ENCODE measurements at regions of chr1 and their contacts with region 1.

Region 1: GRCh38 chr1:25796811-25797458 is 3.1 kb upstream of the SELENON start:
- DNase-seq: peak; percentile 83
- H3K4me3 Mint-ChIP-seq: no peak overlapping the region
- H3K27ac Mint-ChIP-seq: no peak overlapping the region
- H3K4me1 Mint-ChIP-seq: peaks cover 18% of the 10 kb centered on the region
- H3K27me3 Mint-ChIP-seq: no peaks in the 10 kb centered on the region
- CTCF ChIP-seq: peak; percentile 79

Region 2: GRCh38 chr1:25239681-25240541 is 557.0 kb before region 1 on chr1:
- CTCF ChIA-PET with region 1: interaction called, 4 read pairs
- POLR2A ChIA-PET with region 1: interaction called, 3 read pairs
- intact Hi-C with region 1: loop called (anchors 10 kb)
- DNase-seq: peak; percentile 96
- H3K4me3 Mint-ChIP-seq: peak overlapping the region; percentile 78
- H3K27ac Mint-ChIP-seq: peak overlapping the region; percentile 85
- H3K4me1 Mint-ChIP-seq: peaks cover 24% of the 10 kb centered on the region
- H3K27me3 Mint-ChIP-seq: no peaks in the 10 kb centered on the region
- CTCF ChIP-seq: peak; percentile 48

Region 3: DNA sequence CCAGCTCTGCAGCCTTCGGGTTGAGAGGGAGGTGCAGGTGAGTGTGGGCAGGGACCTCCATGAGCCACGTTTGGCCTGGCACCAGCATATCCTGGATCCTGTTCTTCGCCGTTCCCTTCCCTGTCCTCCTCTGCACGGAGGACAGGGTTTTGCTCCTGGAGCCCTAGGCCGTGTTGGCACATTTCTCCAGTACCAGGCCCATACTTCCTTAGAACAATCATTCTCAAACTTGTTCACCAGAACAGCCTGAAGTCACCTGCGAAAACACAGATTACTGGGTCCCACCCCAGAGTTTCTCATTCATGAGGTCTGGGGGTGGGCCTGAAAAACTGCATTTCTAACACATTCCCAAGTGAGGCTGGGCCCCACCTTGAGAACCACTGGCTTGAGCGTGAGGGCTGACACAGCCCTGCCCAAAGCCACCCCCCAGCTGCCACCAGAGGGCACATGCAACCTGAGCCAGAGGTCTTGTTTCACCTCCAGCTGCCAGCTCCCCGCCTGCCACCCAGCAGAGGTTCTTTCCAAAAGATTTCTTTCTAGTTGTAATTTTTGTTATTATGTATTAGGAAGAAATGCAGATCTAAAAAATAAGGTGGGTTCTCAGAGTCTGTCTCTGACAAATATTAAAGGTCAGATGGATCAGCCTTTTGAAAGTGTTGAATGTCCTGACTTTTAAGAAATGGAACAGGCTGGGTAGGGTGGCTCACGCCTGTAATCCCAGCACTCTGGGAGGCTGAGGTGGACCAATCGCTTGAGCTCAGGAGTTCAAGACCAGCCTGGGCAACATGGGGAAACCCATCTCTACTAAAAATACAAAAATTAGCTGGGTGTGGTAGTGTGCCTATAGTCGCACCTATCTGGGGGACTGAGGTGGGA is 293.1 kb before region 1 on chr1:
- CTCF ChIA-PET with region 1: interaction called, 5 read pairs
- POLR2A ChIA-PET with region 1: no interaction called
- intact Hi-C with region 1: loop called (anchors 5 kb)
- DNase-seq: peak; percentile 44
- H3K4me3 Mint-ChIP-seq: no peak overlapping the region
- H3K27ac Mint-ChIP-seq: peak overlapping the region; percentile 31
- H3K4me1 Mint-ChIP-seq: no peaks in the 10 kb centered on the region
- H3K27me3 Mint-ChIP-seq: no peaks in the 10 kb centered on the region
- CTCF ChIP-seq: peak; percentile 48

Region 4: DNA sequence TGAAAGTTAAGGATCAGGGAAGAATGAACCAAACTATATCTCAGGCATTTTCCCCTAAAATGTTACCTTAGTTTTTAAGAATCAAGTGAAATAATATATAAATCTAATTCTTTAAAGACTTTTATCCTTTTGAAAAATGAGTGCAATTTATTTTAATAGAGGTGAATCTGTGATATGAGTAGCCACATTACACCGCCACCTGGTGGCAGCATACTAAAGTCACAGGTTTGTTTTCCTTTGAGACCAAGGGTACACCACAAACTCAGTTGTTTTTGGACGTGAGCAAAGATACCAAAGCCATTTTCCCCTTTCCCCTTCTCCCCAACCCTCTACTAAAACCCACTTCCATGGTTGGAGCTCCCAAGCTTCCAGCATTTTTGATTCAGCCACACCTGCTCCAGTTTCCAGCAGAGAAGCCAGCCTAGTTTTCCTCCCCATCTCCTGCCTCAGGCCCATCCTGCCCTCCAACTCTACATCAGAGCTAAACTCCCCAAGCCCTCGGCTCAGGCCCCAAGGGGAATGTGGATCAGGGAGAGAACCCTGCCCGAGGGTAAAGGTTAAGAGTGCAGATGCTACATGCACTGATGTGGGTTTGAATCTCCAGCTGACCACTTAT is 276.4 kb before region 1 on chr1:
- CTCF ChIA-PET with region 1: interaction called, 7 read pairs
- POLR2A ChIA-PET with region 1: no interaction called
- intact Hi-C with region 1: loop called (anchors 5 kb)
- DNase-seq: peak; percentile 69
- H3K4me3 Mint-ChIP-seq: no peak overlapping the region
- H3K27ac Mint-ChIP-seq: no peak overlapping the region
- H3K4me1 Mint-ChIP-seq: no peaks in the 10 kb centered on the region
- H3K27me3 Mint-ChIP-seq: peaks cover 9% of the 10 kb centered on the region
- CTCF ChIP-seq: peak; percentile 62

Region 5: GRCh38 chr1:25608488-25609178 is 188.3 kb before region 1 on chr1:
- CTCF ChIA-PET with region 1: interaction called, 15 read pairs
- POLR2A ChIA-PET with region 1: no interaction called
- intact Hi-C with region 1: loop called (anchors 1 kb)
- DNase-seq: peak; percentile 81
- H3K4me3 Mint-ChIP-seq: no peak overlapping the region
- H3K27ac Mint-ChIP-seq: no peak overlapping the region
- H3K4me1 Mint-ChIP-seq: no peaks in the 10 kb centered on the region
- H3K27me3 Mint-ChIP-seq: peaks cover 59% of the 10 kb centered on the region
- CTCF ChIP-seq: peak; percentile 35

Region 6: GRCh38 chr1:25695090-25695770 is 101.7 kb before region 1 on chr1:
- CTCF ChIA-PET with region 1: interaction called, 3 read pairs
- POLR2A ChIA-PET with region 1: no interaction called
- intact Hi-C with region 1: loop called (anchors 5 kb)
- DNase-seq: peak; percentile 92
- H3K4me3 Mint-ChIP-seq: no peak overlapping the region
- H3K27ac Mint-ChIP-seq: peak overlapping the region; percentile 57
- H3K4me1 Mint-ChIP-seq: peaks cover 13% of the 10 kb centered on the region
- H3K27me3 Mint-ChIP-seq: no peaks in the 10 kb centered on the region
- CTCF ChIP-seq: peak; percentile 6

Region 7: DNA sequence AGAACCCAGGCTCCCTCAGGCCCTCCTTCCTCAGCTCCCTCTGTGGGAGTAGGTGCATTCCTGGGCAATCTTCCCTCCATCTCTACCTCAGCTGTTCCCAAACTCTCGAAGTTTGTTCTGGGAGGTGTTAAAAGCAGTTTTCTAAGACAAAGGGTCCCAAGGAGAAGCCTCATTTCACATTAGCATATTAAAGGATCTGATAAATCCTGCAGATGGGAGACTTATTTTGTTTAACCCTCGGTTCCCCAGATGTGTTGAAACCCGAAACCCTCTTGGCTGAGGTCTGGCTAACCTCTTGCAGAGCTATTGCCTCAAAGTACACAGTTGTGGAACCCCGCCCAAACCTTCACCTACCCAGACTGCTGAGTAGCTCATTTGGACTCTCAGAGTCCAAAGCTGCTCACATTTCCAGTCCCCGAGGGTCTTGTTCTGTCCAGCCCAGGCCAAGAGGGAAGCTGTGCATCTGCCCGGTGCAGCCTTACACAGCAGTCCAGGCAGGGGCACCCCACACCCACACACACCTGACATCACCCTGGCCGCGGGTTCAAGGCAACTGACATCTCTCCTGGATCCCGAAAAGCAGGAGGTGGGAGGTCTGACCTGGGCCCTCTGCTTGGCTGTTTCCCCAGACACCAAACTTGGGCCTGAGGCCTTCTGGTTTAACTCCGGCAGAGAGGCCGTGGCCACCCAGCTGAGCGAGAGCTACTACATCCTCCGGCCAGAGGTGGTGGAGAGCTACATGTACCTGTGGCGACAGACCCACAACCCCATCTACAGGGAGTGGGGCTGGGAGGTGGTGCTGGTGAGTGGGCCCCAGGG is 16.4 kb before region 1 on chr1:
- CTCF ChIA-PET with region 1: no interaction called
- POLR2A ChIA-PET with region 1: no interaction called
- intact Hi-C with region 1: no loop called
- DNase-seq: peak; percentile 49
- H3K4me3 Mint-ChIP-seq: no peak overlapping the region
- H3K27ac Mint-ChIP-seq: no peak overlapping the region
- H3K4me1 Mint-ChIP-seq: no peaks in the 10 kb centered on the region
- H3K27me3 Mint-ChIP-seq: no peaks in the 10 kb centered on the region
- CTCF ChIP-seq: no peak

Region 8: DNA sequence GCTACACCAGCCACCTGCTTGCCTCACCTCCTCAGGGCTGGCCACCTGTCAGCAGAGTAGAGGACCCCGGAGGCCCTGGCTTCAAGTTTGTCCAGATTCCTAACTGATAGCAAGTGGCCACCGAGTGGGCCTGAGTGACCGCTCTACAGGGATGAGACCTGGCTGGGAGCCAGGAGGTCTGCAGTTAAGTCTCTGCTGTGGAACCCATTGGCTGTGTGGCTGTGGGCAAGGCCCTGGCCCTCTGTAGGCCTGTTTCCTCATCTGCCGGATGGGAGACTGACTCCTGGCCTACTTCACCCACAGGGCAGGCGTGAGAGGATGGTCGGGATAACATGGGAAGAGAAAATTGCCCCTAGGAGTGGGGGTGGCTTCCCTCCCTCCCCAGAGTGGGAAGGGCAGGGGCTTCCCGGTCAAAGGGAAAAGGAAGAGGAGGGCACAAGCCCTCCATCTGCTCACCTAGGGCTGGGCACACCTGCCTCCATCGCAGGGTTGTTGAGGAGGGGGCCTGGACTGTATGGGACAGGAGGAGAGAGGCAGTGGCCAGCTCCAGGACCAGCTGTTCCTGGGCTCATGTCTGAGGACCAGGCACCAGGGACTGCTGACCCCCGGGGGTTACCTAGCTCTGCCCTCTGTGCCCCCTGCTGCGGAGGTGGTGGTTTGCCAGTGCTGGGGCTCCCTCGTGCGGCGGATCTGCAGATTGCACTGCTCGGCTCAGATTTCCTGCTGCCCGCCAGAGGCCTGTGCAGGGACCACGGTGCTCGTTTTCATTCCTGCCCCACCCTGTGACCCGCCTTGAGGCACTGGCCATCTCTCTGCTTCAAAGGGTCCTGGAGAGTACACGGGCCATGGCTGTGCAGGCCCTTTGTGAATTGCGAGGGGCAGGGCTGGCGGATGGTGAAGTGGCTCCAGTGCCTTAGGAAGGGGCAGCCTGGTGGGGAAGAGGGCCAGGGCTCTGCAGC is 13.7 kb after region 1 on chr1:
- CTCF ChIA-PET with region 1: interaction called, 16 read pairs
- POLR2A ChIA-PET with region 1: no interaction called
- intact Hi-C with region 1: no loop called
- DNase-seq: peak; percentile 50
- H3K4me3 Mint-ChIP-seq: no peak overlapping the region
- H3K27ac Mint-ChIP-seq: peak overlapping the region; percentile 70
- H3K4me1 Mint-ChIP-seq: peaks cover 8% of the 10 kb centered on the region
- H3K27me3 Mint-ChIP-seq: no peaks in the 10 kb centered on the region
- CTCF ChIP-seq: peak; percentile 92

Measured in MCF 10A (cell line).